Ovary (tissue), 10 donors: ENCODE measurements at regions of chr3 and their contacts with region 1.

Region 1: DNA sequence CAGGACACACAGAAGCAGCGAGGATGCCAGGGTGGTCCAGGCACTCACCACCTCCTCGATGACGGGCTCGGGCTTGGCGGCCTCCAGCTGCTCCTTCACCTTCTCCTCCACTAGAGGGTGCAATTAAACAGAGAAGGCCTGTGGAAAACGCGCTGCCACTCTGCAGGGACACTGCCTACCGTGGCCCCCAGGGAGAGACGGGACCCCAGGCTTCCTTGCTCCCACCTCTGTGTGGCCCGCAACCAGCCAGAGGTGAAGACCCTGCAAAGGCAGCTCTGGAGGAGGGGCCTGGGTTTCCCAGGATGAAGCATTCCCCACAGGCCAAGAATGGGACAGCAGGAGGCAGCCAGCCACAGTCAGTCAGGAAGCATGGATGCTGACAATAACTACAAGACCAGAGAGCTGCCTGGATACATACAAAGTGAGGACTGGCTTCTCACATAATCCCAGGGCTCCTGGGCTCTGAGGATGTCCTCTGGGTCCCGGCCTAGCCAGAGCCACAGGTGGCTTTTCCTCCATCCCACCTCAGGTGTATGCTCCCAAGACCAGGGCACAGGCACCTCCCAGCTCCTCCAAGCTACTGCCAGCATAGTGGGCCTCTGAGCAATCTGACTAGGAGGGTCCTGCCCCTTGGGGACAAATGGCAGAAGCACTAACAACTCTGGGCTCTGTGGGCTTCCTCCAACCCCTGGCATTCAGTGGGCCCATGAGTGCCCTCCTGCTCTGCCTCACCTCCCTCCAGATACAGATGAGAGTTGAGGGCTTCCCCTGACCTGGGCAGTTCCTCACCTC is 46.2 kb downstream of the PTH1R start:
- DNase-seq: peak in 1 of 5 donors; percentile 51
- H3K4me3 ChIP-seq: no peak overlapping the region
- H3K27ac ChIP-seq: peak overlapping the region in 1 of 2 donors; percentile 38
- H3K4me1 ChIP-seq: no peaks in the 10 kb centered on the region
- H3K27me3 ChIP-seq: no peaks in the 10 kb centered on the region
- CTCF ChIP-seq: peak in 2 of 3 donors; percentile 32 to 38
- EP300 ChIP-seq: no peak
- POLR2A ChIP-seq: no peak

Region 2: GRCh38 chr3:46998121-46998851 is 74.5 kb after region 1 on chr3:
- intact Hi-C with region 1: loop called in 1 of 4 experiments (anchors 5 kb)
- DNase-seq: peak in 4 of 5 donors; percentile 58 to 70 (median 60)
- H3K4me3 ChIP-seq: no peak overlapping the region
- H3K27ac ChIP-seq: no peak overlapping the region
- H3K4me1 ChIP-seq: no peaks in the 10 kb centered on the region
- H3K27me3 ChIP-seq: no peaks in the 10 kb centered on the region
- CTCF ChIP-seq: peak in 2 of 3 donors; percentile 25 to 58
- EP300 ChIP-seq: no peak
- POLR2A ChIP-seq: no peak

Region 3: DNA sequence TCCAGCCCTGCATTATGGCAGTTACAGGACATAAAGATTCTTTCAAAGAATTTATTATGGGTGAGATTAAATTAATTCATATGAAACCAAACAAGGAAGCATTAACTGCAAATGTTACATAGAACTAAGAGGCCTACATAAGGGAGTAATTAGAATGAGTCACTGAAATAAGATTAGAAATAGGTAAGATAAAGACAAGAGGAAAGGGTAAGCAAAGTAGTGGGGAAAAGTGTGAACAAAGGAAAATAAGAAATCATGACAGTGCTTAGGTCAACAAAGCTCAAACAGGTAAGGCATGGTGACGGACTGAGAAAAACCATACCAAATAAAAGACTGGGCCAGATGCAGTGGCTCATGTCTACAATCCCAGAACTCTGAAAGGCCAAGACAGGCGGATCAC is 165.9 kb after region 1 on chr3:
- intact Hi-C with region 1: loop called in 1 of 4 experiments (anchors 5 kb)
- DNase-seq: no peak
- H3K4me3 ChIP-seq: no peak overlapping the region
- H3K27ac ChIP-seq: no peak overlapping the region
- H3K4me1 ChIP-seq: no peaks in the 10 kb centered on the region
- H3K27me3 ChIP-seq: no peaks in the 10 kb centered on the region
- CTCF ChIP-seq: no peak
- EP300 ChIP-seq: no peak
- POLR2A ChIP-seq: no peak